IMR-90 (cell line): ENCODE measurements at regions of chr7 and their contacts with region 1.

Region 1: DNA sequence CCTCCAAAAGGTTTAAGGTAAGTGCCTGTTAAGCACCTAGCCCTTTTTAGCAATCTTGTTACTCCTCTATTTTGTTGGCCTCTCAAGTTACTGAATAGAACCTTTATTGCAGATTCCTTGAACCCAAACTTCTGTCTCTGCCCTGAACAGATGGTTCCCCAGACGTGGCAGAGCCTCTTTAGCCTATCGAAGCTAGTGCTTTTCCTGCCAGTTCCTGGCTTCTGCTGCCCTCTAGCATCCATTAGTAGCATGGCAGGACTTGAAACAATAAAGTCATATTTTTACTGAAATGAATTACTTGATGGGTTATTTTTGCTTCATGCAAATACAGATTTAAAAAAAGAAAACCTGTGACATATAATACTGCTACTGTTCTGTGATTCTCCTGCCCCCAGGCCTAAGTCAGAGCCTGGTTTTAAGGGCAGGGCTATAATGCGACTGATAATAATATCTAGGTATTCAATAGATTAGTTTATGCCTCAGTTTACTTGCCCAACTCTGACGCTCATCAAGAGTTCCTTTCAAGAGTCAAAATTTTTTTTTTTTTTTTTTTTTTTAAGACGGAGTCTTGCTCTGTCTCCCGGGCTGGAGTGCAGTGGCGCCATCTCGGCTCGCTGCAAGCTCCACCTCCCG is 84.3 kb upstream of the PHF14 start:
- DNase-seq: peak; percentile 51
- ATAC-seq: peak; percentile 77
- H3K4me3 ChIP-seq: no peak overlapping the region
- H3K27ac ChIP-seq: no peak overlapping the region
- H3K4me1 ChIP-seq: no peaks in the 10 kb centered on the region
- H3K27me3 ChIP-seq: no peaks in the 10 kb centered on the region
- CTCF ChIP-seq: peak; percentile 65
- POLR2A ChIP-seq: no peak
- RAD21 ChIP-seq: peak; percentile 66

Region 2: DNA sequence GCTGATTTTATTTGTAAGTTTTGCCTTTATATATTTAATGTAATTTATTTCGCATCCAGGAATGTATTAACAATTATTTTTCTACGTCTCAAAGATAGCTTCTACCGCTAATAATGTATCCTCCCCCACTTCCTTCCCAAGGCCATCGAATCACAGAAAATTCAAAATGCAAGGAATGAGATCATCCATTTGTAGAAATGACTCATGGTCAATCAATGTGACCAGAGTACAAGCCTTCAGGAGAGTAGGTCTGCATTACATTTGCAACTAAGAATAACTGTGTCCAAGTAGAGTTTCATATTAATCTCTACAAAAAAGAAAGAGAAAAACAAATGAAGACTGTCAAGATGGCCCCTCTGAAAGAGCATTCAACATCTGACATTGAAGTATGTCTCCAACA is 121.6 kb before region 1 on chr7:
- CTCF ChIA-PET with region 1: no interaction called
- POLR2A ChIA-PET with region 1: no interaction called
- dilution Hi-C with region 1: no loop called
- in situ Hi-C with region 1: no loop called
- intact Hi-C with region 1: no loop called
- DNase-seq: no peak
- ATAC-seq: no peak
- H3K4me3 ChIP-seq: no peak overlapping the region
- H3K27ac ChIP-seq: no peak overlapping the region
- H3K4me1 ChIP-seq: no peaks in the 10 kb centered on the region
- H3K27me3 ChIP-seq: no peaks in the 10 kb centered on the region
- CTCF ChIP-seq: no peak
- POLR2A ChIP-seq: no peak
- RAD21 ChIP-seq: no peak

Region 3: DNA sequence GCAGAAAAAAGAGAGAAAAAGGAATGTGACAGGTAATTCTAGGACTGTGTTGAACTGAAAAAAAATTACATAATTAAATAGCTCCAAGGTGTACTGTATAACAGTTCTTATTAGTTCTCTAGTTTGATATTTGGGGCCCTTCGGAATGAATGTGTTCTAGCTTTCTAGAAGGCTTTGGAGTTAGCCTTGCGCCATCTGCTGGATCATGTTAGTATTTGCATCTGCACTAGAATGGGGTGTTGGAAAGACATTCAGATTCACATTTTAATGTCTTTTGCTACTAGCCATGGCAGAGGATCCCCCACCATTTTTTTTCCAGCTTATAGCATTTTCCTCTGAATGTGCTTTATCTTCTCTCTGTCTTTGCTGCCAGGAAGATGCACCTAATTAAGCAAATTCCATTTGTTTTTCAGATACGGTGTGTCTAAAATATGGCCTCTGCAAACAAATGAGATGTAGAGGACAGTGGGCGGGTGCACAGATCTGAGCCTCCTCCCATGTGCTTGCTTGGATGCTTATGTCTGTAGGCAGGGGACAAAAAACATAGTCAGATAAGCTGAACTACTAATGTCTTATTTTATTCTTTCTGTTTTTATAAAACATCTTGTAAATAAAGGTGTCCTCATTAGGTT is 322.8 kb after region 1 on chr7:
- CTCF ChIA-PET with region 1: no interaction called
- POLR2A ChIA-PET with region 1: no interaction called
- dilution Hi-C with region 1: no loop called
- in situ Hi-C with region 1: no loop called
- intact Hi-C with region 1: loop called (anchors 2 kb)
- DNase-seq: peak; percentile 66
- ATAC-seq: peak; percentile 88
- H3K4me3 ChIP-seq: no peak overlapping the region
- H3K27ac ChIP-seq: no peak overlapping the region
- H3K4me1 ChIP-seq: peaks cover 5% of the 10 kb centered on the region
- H3K27me3 ChIP-seq: no peaks in the 10 kb centered on the region
- CTCF ChIP-seq: peak; percentile 76
- POLR2A ChIP-seq: no peak
- RAD21 ChIP-seq: peak; percentile 74

Region 4: GRCh38 chr7:11343818-11344413 is 454.5 kb after region 1 on chr7:
- CTCF ChIA-PET with region 1: no interaction called
- POLR2A ChIA-PET with region 1: no interaction called
- dilution Hi-C with region 1: no loop called
- in situ Hi-C with region 1: no loop called
- intact Hi-C with region 1: loop called (anchors 5 kb)
- DNase-seq: peak; percentile 26
- ATAC-seq: no peak
- H3K4me3 ChIP-seq: no peak overlapping the region
- H3K27ac ChIP-seq: no peak overlapping the region
- H3K4me1 ChIP-seq: no peaks in the 10 kb centered on the region
- H3K27me3 ChIP-seq: no peaks in the 10 kb centered on the region
- CTCF ChIP-seq: peak; percentile 69
- POLR2A ChIP-seq: no peak
- RAD21 ChIP-seq: peak; percentile 69